ENCODE measurements at regions of chr15 and their contacts with region 1.

Region 1: GRCh38 chr15:89177633-89178306 is 43.6 kb downstream of the RLBP1 start:
- DNase-seq: no peak
- ATAC-seq: peak; percentile 68
- H3K4me3 ChIP-seq: no peak overlapping the region
- H3K27ac ChIP-seq: no peak overlapping the region
- H3K4me1 ChIP-seq: peaks cover 4% of the 10 kb centered on the region
- H3K27me3 ChIP-seq: no peaks in the 10 kb centered on the region
- CTCF ChIP-seq: peak; percentile 77

Region 2: DNA sequence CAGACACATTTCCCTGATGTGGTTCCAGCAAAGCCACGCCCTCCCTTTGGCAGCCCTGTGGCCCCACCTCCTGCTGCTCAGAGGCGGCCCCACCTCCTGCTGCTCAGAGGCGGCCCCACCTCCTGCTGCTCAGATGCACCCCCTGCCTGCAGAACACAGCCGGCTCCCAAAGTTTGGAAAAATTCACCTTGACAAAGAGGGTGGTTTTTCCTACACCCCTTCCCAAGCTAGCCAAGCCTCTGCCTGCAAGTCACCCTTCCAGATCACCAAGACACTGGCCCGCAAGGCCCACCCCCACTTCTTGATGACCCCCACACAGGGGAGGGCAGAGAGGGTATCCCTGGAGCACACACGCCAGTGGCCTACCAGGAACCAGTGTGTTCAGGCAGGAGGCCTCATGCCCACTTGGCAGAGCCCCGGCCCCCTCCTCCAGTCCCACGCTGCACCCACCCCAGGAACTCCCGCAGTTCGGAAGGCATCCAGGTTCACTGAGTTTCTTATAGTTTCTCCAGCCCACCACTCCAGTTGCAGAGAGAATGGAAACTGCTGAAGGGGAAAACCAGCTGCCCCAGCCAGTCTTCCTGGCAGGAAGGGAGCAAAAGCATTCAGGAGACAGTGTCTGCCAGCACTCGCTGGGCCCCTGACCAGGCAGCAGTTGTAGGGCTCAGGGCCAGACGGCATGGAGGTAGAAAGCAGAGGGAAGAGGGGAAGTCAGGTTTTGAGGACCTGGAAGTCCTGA is 280.1 kb before region 1 on chr15:
- intact Hi-C with region 1: loop called (anchors 10 kb)
- DNase-seq: peak; percentile 91
- ATAC-seq: peak; percentile 90
- H3K4me3 ChIP-seq: no peak overlapping the region
- H3K27ac ChIP-seq: no peak overlapping the region
- H3K4me1 ChIP-seq: peaks cover 27% of the 10 kb centered on the region
- H3K27me3 ChIP-seq: peaks cover 7% of the 10 kb centered on the region
- CTCF ChIP-seq: peak; percentile 62

Region 3: DNA sequence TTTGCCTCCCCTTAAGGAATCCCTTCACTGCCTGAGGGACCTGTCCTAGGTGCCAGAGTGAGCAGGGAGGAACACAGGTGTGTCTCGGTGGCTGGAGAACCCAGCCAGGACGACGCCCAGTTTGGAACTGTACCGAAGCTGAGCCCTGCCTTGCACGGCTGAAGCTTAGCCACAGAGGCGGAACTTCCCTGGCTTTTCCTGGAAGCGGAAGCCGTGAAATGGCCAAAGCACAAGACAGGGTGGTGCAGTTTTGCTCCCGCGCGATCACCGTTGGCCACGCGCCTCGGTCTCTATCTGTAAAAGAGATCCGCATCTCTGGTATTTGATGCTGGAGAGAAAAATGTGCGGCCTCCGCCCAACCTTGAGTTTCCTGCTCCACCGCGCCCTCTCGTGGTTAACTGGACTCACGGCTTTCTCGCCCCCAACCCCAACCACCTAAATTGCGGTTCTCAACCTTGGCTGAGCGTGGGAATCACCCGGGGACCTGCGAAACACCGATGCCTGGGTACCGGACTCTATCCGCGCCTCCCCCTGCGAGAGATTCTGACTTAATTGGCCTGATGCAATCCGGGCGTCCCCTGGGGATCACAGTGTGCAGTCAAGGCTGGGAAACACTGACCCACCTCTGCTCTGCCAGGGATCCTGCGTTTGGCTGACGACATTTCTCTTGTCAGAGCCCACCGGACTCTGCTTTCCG is 160.3 kb before region 1 on chr15:
- intact Hi-C with region 1: no loop called
- DNase-seq: peak; percentile 85
- ATAC-seq: peak; percentile 85
- H3K4me3 ChIP-seq: peak overlapping the region; percentile 21
- H3K27ac ChIP-seq: peak overlapping the region; percentile 42
- H3K4me1 ChIP-seq: peaks cover 44% of the 10 kb centered on the region
- H3K27me3 ChIP-seq: no peaks in the 10 kb centered on the region
- CTCF ChIP-seq: peak; percentile 71

Region 4: DNA sequence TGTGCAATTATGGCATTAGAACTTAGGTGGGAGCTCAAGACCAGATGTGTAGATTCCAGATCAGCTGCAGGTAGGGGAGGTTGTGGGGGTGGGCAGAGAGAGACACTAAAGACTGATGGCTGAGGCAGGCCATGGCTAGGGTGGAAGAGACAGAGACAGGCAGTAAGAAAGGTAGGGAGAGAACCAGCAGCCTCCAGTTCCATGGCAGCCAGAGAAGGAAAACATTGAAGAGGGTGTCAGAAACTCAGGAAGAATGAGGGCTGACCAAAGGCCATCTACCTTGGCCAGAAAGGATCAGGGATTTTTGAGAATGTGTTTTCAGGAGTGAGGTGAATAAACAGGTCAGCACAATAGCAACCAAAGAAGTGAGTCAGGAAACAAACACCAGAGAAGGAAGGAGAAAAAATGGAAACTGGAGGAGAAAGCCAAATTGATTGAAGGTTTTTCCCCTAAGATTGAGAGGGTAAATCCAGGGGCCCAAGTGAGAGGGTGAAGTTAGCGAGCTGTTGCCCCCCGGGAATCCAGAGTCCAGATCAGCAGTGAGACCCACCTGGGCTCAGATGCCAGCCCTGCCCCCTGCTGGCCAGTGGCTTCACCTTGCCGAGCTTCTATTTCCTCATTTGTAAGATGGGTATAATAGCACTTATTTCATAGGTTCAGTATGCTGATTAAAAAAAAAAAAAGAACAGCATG is 48.5 kb before region 1 on chr15:
- intact Hi-C with region 1: no loop called
- DNase-seq: peak; percentile 73
- ATAC-seq: peak; percentile 37
- H3K4me3 ChIP-seq: no peak overlapping the region
- H3K27ac ChIP-seq: peak overlapping the region; percentile 24
- H3K4me1 ChIP-seq: peaks cover 24% of the 10 kb centered on the region
- H3K27me3 ChIP-seq: no peaks in the 10 kb centered on the region
- CTCF ChIP-seq: peak; percentile 63

Region 5: GRCh38 chr15:89211730-89212129 is 34.0 kb after region 1 on chr15:
- intact Hi-C with region 1: no loop called
- DNase-seq: no peak
- ATAC-seq: no peak
- H3K4me3 ChIP-seq: no peak overlapping the region
- H3K27ac ChIP-seq: no peak overlapping the region
- H3K4me1 ChIP-seq: no peaks in the 10 kb centered on the region
- H3K27me3 ChIP-seq: no peaks in the 10 kb centered on the region
- CTCF ChIP-seq: no peak

Measured in upper lobe of right lung (tissue), 1 donor.